AG04449 (cell line): ENCODE measurements at regions of chr1 and their contacts with region 1.

Region 1: DNA sequence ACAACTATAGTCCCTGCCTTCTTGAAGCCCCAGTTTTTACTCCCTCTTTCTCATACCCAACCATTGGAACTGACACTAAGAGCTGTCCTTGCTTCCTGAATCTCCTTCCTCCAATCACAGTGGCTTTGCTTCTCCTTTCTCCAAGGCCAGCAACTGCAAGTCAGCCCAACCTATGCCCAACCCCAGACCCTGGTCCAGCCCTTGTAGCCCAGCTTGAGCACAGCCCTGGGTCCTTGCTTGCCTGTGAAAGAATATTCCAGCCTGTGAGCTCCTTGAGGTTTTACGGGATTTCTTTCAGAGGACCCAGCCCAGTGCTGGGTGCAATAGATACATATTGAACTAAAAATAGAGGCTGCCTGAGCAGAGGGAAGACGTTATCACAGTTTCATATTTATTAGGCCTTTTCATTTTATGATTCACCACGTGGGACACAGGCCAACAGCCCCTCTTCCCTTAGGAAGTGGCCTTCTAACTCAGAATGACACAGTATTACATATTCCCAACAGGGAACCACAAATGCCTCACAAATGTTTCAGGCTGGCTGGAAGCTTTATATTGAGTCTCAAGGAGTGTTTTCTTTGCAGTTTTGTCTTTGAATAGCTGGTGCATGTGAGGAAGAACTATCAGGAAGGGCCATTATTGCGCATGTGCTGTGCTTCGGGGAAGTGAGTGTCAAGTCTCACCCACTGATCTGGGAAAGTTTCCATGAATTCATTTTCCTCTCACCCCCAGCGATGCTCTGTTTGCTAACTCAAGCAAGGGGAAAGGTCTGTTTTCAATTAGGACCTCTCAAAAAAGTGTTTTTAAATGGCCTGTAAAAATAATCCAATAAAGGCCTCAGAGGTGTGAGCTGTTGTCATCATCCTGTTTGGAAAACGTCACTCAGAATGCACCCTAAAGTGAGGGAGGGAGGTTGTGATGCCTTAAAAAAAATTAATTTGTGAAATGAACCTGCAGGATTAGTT is 92.3 kb upstream of the NFIA start:
- DNase-seq: peak; percentile 61
- H3K4me3 ChIP-seq: no peak overlapping the region
- CTCF ChIP-seq: no peak

Region 2: DNA sequence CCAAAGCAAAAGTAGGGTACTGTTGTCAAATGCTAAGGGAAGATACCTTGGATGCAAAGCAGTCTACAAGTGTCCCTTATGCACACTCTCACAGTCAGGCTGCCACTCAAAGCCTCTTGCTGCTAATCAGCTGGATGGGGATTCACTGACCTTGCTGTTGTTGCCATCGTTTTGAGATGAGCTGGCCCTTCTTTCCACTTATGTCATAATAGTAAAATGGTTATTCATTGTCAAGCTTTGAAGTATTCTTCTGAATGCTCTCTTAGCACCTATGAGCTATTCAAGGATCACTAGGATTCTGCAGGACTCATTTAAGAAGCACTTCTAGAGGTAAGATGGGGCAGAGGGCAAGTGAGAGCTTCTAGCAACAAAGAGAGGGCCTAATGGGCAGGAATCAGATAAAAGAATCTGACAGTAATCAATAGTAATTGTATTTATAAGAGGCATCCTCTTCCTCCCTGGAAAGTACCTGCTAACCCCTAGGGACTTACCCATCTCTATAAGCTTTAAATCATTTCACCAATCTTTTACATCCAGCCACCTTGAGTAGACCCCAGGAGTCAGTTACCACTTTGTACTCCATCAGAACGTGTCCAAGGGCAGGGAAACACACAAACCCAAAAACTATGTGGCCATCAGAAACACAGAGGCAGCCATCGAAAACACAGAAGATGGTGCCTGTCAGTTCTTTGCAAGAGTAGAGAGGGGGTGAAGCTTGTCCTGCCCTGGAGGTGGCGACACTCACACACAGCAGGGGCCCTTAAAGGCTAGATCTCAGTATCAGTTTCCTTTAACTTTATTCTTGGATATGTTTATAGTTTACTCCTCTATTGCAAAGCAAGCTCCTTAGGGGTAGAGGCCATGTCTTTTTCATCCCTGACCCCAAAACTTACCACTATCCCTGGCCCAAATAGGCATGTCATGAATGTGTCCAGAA is 11.3 kb before region 1 on chr1:
- CTCF ChIA-PET with region 1: interaction called, 27 read pairs
- POLR2A ChIA-PET with region 1: no interaction called
- DNase-seq: no peak
- H3K4me3 ChIP-seq: no peak overlapping the region
- CTCF ChIP-seq: peak; percentile 76

Region 3: GRCh38 chr1:61017651-61018050 is 27.6 kb after region 1 on chr1:
- CTCF ChIA-PET with region 1: no interaction called
- POLR2A ChIA-PET with region 1: no interaction called
- DNase-seq: no peak
- H3K4me3 ChIP-seq: no peak overlapping the region
- CTCF ChIP-seq: no peak